GM12878 (cell line): ENCODE measurements at regions of chr16 and their contacts with region 1.

Region 1: DNA sequence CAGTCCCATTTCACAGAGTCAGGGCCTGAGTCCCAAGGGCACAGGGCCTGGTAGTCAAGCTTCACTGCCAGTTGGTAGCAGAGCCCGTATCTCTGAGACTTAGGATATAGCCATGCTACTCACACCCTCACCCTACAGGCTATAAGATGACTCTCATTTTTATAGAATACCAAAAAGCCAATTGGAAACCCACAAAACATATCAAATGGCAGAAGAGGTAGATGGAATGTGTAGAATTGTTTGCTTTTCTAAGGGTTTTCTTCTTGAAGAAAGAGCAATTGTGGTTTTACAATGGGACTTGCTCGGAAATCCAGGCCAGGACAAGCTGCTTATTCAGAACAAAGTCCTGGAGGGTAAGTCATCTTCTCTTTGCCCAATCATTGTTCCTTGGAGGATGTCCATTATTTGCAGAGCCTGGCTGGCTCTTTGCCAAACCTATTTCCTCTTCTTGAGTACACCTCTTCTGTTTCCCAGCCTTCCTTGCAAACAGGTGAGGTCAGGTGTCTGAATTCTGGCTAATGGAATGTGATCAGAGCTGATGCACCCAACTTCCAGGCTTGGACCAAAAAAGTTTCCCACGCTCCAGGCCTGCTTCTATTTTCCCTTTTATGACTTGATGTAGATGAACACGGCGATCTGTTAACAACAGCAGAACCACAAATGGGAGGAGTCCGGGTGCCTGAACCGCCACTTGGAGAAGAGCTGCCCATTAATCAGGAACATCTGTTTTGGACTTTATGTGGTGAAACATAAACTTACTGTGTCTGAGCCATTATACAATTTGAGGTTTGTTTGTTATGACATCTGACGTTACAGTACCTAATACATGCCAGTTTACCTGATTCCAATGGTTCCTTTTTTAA is 16.9 kb upstream of the CCL22 start:
- DNase-seq: no peak
- ATAC-seq: peak; percentile 43
- H3K4me3 ChIP-seq: no peak overlapping the region
- H3K27ac ChIP-seq: peak overlapping the region; percentile 38
- H3K4me1 ChIP-seq: peaks cover 44% of the 10 kb centered on the region
- H3K27me3 ChIP-seq: no peaks in the 10 kb centered on the region
- CTCF ChIP-seq: no peak
- EP300 ChIP-seq: no peak
- POLR2A ChIP-seq: no peak
- RAD21 ChIP-seq: 0 out of 2 replicates have a peak, but pooled peaks have one; percentile 1

Region 2: DNA sequence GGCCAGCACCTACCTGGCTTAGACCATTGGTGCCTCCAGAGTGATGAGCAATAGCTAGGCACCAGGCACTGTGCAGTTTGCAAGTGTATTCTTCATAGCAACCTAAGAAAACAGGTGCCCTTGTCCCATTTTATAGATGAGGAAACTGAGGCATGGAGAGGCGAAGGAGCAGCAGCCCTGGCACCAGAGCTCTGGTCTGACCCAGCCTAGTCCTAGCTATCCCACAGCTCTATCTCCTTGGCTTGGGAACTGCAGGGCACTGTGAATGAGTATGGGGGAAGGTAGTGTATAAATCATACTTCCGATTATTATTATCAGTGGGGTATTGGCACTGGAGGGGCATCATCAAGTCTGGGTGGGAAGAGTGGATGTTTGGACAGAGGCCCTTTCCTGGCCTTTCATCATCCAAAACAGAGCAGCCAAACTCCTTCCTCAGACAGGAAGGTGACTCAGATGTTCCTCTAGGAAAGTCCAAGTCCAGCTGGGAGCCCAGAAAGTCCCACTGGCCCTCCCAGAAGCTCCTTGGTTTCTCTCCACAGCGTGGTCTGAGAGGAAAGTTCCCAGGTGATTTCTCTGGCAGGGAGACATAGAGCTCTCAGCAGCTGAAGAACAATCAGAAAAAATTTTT is 25.2 kb before region 1 on chr16:
- CTCF ChIA-PET with region 1: interaction called, 3 read pairs
- POLR2A ChIA-PET with region 1: interaction called, 7 read pairs
- RAD21 ChIA-PET with region 1: interaction called, 5 read pairs
- SMC1A ChIA-PET with region 1: interaction called, 10 read pairs
- in situ Hi-C with region 1: no loop called
- intact Hi-C with region 1: no loop called
- DNase-seq: no peak
- ATAC-seq: no peak
- H3K4me3 ChIP-seq: no peak overlapping the region
- H3K27ac ChIP-seq: no peak overlapping the region
- H3K4me1 ChIP-seq: peaks cover 16% of the 10 kb centered on the region
- H3K27me3 ChIP-seq: no peaks in the 10 kb centered on the region
- CTCF ChIP-seq: no peak
- EP300 ChIP-seq: no peak
- POLR2A ChIP-seq: no peak
- RAD21 ChIP-seq: no peak

Region 3: GRCh38 chr16:57358527-57359095 is 16.9 kb after region 1 on chr16 and contains the start of gene CCL22:
- CTCF ChIA-PET with region 1: interaction called, 3 read pairs
- POLR2A ChIA-PET with region 1: interaction called, 4 read pairs
- RAD21 ChIA-PET with region 1: interaction called, 9 read pairs
- SMC1A ChIA-PET with region 1: interaction called, 7 read pairs
- in situ Hi-C with region 1: no loop called
- intact Hi-C with region 1: loop called (anchors 1 kb)
- DNase-seq: peak; percentile 45
- ATAC-seq: peak; percentile 71
- H3K4me3 ChIP-seq: peak within 1 kb of the TSS; percentile 37; the same call in 1 of the 2 replicates
- H3K27ac ChIP-seq: peak within 1 kb of the TSS; percentile 30
- H3K4me1 ChIP-seq: peaks cover 23% of the 10 kb centered on the region
- H3K27me3 ChIP-seq: no peaks in the 10 kb centered on the region
- CTCF ChIP-seq: no peak
- EP300 ChIP-seq: no peak; a peak in 1 of 4 replicates
- POLR2A ChIP-seq: peak; percentile 89
- RAD21 ChIP-seq: no peak
- polyA plus RNA-seq, gene CCL22: 581 to 591 TPM

Region 4: GRCh38 chr16:57380671-57381462 is 39.2 kb after region 1 on chr16:
- CTCF ChIA-PET with region 1: interaction called, 14 read pairs
- POLR2A ChIA-PET with region 1: interaction called, 4 read pairs
- RAD21 ChIA-PET with region 1: interaction called, 41 read pairs
- SMC1A ChIA-PET with region 1: interaction called, 21 read pairs
- in situ Hi-C with region 1: no loop called
- intact Hi-C with region 1: loop called (anchors 1 kb)
- DNase-seq: no peak
- ATAC-seq: peak; percentile 3
- H3K4me3 ChIP-seq: no peak overlapping the region
- H3K27ac ChIP-seq: peak overlapping the region; percentile 27
- H3K4me1 ChIP-seq: peaks cover 53% of the 10 kb centered on the region
- H3K27me3 ChIP-seq: no peaks in the 10 kb centered on the region
- CTCF ChIP-seq: no peak
- EP300 ChIP-seq: no peak
- POLR2A ChIP-seq: no peak
- RAD21 ChIP-seq: no peak

Region 5: GRCh38 chr16:57528491-57529390 is 187.1 kb after region 1 on chr16:
- CTCF ChIA-PET with region 1: no interaction called
- POLR2A ChIA-PET with region 1: no interaction called
- RAD21 ChIA-PET with region 1: no interaction called
- SMC1A ChIA-PET with region 1: no interaction called
- in situ Hi-C with region 1: no loop called
- intact Hi-C with region 1: no loop called
- DNase-seq: no peak
- ATAC-seq: no peak
- H3K4me3 ChIP-seq: no peak overlapping the region
- H3K27ac ChIP-seq: no peak overlapping the region
- H3K4me1 ChIP-seq: peaks cover 24% of the 10 kb centered on the region
- H3K27me3 ChIP-seq: no peaks in the 10 kb centered on the region
- CTCF ChIP-seq: no peak
- EP300 ChIP-seq: no peak
- POLR2A ChIP-seq: no peak
- RAD21 ChIP-seq: no peak